Esophagus squamous epithelium (tissue), 5 donors: ENCODE measurements at regions of chr17 and their contacts with region 1.

Region 1: DNA sequence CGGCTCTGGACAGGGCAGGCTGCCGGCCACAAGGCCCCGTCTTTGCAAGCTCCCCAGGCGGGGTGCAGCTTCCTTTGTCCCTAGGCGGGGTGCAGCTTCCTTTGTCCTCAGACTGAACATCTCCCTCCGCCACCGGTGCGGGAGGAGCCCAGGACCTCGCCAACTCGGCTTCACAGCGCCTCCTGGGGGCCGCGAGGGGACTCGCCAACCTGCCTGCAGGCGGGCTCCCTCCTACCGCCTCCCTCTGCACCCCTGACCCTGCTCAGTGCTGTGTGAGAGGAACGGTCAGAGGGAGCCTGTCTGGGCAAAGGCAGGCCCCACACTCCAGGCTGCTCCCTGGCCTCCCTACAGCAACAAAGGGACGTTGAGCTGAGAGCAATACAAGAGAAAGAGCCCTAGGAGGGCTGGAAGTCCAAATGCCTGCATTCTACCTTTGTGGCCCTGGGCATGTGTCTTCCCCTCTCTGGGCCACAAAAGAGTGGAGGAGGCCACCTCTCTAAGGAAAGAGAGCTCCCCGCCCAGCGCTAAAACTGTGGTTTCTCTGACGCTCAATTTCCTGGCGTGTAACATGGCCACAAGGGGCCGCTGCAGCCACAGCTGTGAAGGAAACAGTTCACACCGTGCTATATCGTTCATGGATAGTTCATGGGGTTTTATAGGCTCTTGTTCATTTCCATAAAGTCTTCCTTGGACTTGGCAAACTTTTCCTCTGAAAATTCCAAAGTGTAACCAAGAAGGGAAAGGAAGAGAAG is 20.9 kb upstream of the KRT19 start:
- DNase-seq: no peak
- H3K4me3 ChIP-seq: peak overlapping the region; percentile 5 to 60 (median 37)
- H3K27ac ChIP-seq: peak overlapping the region; percentile 86 to 93 (median 88)
- H3K4me1 ChIP-seq: peaks cover 22 to 47% (median 31%) of the 10 kb centered on the region in 3 donors
- H3K27me3 ChIP-seq: no peaks in the 10 kb centered on the region
- CTCF ChIP-seq: peak; percentile 79 to 93 (median 86)
- POLR2A ChIP-seq: peak in 1 of 4 donors; percentile 21

Region 2: DNA sequence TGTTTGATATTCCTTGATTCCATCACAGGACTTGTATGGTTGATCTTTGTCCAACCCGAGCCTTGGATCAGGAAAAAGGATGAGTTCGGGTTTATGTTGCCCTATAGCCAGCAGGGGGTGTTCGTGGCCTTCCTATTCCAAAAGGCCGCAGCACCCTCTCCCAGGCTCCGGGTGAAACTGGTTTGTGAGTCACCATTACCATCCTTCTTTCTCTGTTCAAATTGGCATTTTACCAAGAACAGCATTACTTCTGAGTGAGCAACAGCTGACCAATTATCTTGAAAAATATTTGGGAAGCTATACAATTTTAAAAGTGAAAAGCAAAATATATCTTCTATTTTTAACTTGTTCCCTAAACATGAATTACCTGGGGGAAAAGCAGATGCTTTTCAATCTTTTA is 639.7 kb before region 1 on chr17:
- intact Hi-C with region 1: loop called (anchors 10 kb)
- DNase-seq: peak; percentile 27
- H3K4me3 ChIP-seq: no peak overlapping the region
- H3K27ac ChIP-seq: peak overlapping the region; percentile 58 to 86 (median 70)
- H3K4me1 ChIP-seq: peaks cover 8 to 40% (median 12%) of the 10 kb centered on the region in 3 donors
- H3K27me3 ChIP-seq: peaks cover 0 to 15% (median 0%) of the 10 kb centered on the region in 4 donors
- CTCF ChIP-seq: peak; percentile 49 to 91 (median 86)
- POLR2A ChIP-seq: no peak

Region 3: GRCh38 chr17:41082626-41083025 is 466.4 kb before region 1 on chr17:
- intact Hi-C with region 1: no loop called
- DNase-seq: no peak
- H3K4me3 ChIP-seq: no peak overlapping the region
- H3K27ac ChIP-seq: no peak overlapping the region
- H3K4me1 ChIP-seq: no peaks in the 10 kb centered on the region
- H3K27me3 ChIP-seq: no peaks in the 10 kb centered on the region
- CTCF ChIP-seq: no peak
- POLR2A ChIP-seq: no peak

Region 4: DNA sequence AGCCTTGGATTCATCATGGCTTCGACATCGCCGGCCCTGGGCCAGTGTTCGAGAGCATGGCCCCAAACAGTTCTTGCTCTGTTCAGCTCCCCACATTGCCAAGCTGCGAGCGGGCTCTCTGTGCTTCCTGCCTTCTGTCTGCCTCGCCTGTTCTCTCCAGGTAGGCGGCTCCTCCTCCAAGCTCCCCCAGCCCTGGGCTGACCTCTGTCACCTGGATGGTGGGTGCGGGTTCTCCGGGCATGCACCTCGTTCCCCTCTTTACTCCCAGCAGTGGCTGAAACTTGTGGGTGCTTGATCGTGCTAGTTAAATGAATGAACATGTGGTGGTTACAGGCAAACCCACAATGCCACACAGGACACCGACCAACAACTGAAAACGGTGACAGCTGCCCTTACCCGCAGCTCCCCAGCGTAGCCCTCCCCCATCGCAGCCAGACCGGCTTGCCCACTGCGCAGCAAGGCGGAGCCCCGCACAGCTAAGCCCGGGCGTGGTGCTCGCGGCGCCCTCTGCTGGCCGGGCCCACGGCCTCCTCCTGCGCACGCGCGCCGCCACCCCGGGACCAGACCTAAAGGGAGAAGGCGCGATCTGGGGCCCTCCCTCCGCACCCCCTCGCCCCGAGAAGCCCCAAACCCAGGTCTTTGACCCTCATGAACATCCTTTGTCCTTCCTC is 116.7 kb after region 1 on chr17:
- intact Hi-C with region 1: loop called (anchors 5 kb)
- DNase-seq: peak; percentile 30
- H3K4me3 ChIP-seq: peak overlapping the region; percentile 28 to 66 (median 50)
- H3K27ac ChIP-seq: peak overlapping the region; percentile 93 to 98 (median 97)
- H3K4me1 ChIP-seq: peaks cover 21 to 82% (median 28%) of the 10 kb centered on the region in 3 donors
- H3K27me3 ChIP-seq: no peaks in the 10 kb centered on the region
- CTCF ChIP-seq: peak; percentile 85 to 99 (median 98)
- POLR2A ChIP-seq: peak in 3 of 4 donors; percentile 35 to 88 (median 86)